RWPE1 (cell line): ENCODE measurements at regions of chr20 and their contacts with region 1.

Region 1: DNA sequence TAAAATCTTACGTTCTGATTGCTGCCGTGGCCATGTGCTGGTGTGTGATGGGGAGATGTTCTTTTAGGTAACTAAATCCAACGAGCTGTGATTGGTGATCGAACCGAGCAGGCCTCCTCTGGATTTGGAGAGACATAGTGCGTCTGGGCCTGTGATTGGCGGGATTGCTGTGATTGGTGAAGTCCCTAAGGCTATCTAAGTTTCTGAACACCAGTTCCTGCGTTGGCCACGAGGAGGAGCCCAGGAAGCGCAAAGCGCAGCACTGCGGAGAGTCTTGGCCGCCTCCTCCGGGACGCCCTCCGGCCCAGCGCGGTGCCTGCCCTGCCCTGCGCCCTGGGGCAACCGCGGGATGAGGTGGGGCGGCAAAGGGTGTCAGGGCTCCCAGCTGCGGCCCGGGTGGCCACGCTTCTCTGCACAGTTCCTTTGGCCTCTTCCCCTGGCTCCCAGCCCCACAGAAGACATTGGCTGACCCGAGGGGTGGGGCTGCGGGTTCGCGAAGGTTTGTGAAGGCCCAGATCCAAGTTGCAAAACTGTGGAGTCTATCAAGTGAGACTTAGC is 33.0 kb downstream of the HNF4A start:
- DNase-seq: peak; percentile 90
- H3K27ac ChIP-seq: no peak overlapping the region
- CTCF ChIP-seq: peak; percentile 94

Region 2: GRCh38 chr20:44153636-44154043 is 234.9 kb before region 1 on chr20:
- CTCF ChIA-PET with region 1: no interaction called
- POLR2A ChIA-PET with region 1: no interaction called
- DNase-seq: no peak
- H3K27ac ChIP-seq: no peak overlapping the region
- CTCF ChIP-seq: no peak

Region 3: DNA sequence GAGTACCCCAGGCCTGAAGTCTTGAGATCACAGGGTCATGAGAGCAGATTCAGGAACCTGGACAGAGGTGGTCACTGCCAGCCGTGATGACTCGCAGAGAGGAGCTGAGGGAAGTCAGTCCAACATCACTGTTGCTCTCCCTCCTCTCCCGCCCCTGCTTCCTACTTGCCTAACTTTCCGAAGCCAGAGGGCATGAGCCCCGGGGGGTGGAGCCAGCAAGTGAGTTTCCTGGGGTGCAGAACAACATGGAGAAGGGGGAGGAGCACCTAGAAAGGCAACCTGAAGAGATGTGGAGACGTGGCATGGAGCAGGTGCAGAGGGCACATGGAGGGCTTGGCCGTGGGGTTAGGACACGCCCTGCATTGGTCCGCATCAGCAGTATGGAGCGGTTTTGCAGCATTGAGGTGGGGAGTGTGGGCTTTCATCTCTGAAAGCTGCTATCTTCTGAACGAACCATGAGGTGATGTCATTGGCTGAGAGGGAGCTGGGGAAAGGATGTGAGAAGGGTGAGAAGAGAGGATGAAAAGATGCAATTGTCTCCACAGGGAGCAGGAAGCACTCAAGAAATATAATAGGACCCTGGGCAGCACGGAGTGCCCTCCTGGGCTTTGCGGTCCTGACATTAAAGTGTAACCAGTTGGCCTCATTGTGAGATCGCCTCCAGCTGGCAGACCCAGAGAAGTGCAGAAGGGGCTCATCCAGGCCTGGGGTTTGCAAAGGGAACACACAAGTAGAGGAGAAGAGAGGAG is 116.5 kb before region 1 on chr20:
- CTCF ChIA-PET with region 1: interaction called, 10 read pairs
- POLR2A ChIA-PET with region 1: no interaction called
- DNase-seq: no peak
- H3K27ac ChIP-seq: no peak overlapping the region
- CTCF ChIP-seq: no peak

Region 4: GRCh38 chr20:44350567-44350966 is 38.0 kb before region 1 on chr20:
- CTCF ChIA-PET with region 1: no interaction called
- POLR2A ChIA-PET with region 1: no interaction called
- DNase-seq: no peak
- H3K27ac ChIP-seq: no peak overlapping the region
- CTCF ChIP-seq: no peak

Region 5: GRCh38 chr20:44370639-44371220 is 17.8 kb before region 1 on chr20:
- CTCF ChIA-PET with region 1: interaction called, 20 read pairs
- POLR2A ChIA-PET with region 1: no interaction called
- DNase-seq: no peak
- H3K27ac ChIP-seq: no peak overlapping the region
- CTCF ChIP-seq: no peak

Region 6: DNA sequence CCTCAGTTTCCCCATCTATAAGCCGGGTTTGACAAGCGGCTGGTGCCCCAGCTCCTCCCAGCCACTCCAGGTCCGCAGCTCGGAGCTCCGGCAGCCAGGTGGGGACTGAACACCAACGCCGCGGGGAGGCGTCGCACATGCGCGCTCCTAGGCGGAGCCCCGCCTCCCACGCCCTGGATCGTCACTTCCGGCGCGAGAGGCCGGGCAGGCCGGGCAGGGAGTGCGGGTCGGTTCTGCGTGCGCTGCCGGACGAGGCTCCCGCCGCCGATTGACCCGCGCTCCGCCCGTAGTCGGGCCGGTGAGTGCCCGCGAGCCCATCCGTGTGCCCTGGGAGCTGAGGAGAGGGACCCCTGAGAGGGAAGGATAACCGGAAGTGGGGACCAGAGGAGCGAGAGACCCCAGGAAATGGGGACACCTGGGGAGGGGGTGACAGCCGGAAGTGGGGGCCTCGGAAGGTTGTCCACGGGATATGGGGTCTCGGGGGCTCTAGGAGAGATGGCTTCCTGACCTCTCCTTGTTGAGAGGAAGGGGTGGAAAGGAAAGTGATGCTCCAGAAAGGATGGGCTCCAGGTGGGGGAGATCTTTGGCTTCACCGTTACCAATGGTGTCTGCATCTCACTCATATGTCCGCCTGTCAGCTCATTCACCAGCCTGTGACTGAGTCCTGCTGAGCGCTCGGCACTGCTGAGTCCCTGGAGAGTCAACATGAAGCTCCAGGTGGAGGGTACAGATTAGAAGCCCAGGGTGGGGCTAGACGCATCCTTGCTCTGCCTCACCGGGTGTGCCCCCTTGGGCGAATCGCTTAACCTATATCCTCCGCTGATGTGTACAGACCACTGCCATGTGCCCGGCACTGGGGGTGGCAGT is 87.4 kb after region 1 on chr20 and contains the start of gene TTPAL:
- CTCF ChIA-PET with region 1: interaction called, 27 read pairs
- POLR2A ChIA-PET with region 1: no interaction called
- DNase-seq: peak; percentile 99
- H3K27ac ChIP-seq: peak within 1 kb of the TSS; percentile 68
- CTCF ChIP-seq: no peak; the same call in 1 of the 2 replicates

Region 7: DNA sequence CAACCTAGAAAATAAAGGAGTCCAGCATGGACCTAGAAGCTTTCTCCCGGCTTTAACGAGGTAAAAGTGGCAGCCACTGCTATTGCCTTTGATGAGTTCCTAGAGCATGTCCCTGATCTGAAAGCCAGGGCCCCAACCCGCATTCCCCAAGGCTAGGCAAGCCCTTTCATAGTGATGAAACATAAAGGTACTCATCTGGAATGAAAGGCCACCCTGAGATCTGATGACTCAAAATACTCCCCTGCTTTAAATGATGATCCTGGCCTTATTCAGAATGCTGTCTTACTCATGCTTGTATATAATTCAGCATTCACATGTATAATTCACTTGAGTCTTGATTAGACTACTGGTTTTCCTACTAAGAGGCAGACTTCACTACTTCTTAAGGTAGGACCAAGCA is 108.4 kb after region 1 on chr20:
- CTCF ChIA-PET with region 1: no interaction called
- POLR2A ChIA-PET with region 1: no interaction called
- DNase-seq: peak; percentile 97
- H3K27ac ChIP-seq: peak overlapping the region; percentile 82
- CTCF ChIP-seq: no peak